Caki2 (cell line): ENCODE measurements at regions of chr1 and their contacts with region 1.

Region 1: GRCh38 chr1:28259307-28260167 is at the start of gene SESN2:
- DNase-seq: peak; percentile 98
- total RNA-seq, gene SESN2: 21.7 TPM in 2 replicates

Region 2: DNA sequence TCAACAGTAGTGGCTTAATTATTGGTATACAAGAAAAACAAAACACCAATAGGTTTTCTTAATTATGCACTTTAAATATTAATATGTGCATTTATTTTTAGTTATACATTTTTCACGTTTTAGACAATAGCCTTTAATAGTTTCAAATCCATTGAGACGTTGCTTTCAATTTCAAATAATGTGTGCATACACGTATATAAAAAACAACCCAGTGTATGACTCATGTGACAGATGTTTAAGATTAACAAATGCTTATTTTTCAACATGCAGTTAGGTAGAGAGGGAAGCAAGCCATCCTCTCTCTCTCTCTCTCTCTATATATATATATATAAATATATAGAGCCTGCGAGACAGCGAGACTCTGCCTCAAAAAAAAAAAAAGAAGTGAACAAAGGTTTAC is 195.5 kb before region 1 on chr1:
- in situ Hi-C with region 1: no loop called
- DNase-seq: no peak

Region 3: DNA sequence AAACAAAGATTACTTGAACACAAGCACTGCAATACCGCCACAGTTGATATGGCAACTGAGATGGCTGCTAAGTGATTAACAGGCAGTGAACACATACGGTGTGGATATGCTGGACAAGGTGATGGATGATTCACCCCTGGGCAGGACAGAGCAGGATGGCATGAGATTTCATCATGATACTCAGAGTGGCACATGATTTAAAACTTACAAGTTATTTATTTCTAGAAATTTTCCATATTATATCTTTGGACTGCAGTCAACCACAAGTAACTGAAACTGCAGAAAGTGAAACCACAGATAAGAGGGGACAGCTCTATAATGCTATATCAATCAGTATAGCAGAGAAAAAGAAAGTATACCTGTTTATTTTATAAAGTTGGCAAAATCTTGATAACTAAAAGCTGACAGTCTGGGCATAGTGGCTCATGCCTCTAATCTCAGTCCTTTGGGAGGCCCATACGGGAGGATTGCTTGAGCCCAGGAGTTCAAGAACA is 157.9 kb after region 1 on chr1:
- in situ Hi-C with region 1: loop called (anchors 10 kb)
- DNase-seq: peak; percentile 79